ENCODE measurements at regions of chr19 and their contacts with region 1.

Region 1: DNA sequence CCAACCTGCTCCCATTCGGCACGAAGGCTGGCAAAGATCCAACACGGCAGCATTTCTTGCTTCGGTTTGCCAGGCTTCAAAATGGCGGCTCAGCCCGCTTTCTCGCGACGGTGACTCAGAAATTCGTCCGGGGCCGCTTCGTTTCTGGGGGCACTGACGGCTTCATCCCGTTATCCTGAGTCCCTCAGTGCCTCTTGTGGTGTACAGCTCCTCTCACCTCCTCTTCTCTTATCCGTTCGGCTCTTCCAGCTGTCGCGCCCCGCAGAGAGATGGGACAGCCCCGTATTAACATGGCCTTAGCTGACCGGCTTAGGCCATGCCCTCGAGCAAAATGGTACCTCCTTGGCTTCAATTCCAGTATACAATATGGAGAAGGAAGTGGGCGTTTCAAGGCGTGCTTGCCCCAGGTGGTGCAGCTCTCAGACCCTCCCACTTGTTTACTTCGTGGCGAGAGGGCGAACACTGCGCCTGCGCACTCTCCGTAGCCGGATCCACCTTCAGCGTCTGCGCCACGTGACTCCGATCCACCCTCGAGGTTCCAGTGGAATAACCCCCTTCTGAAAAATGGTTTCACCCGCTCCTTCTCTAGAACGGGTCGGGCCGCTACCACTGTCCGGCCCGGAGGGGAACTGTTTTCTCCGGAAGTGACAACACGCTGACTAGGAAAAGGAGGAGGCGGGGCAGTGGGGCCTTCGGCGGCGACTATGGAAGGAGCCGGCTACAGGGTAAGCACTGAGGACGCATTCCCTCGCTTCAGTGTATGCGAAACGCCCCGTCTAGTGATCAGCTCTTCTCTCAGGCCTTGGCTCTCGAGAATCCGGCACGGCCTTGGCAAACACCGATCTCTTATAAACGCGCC is at the starts of genes AKT1S1 and TBC1D17:
- DNase-seq: peak; percentile 100
- H3K4me3 Mint-ChIP-seq: no peak within 1 kb of the TSS
- H3K27ac Mint-ChIP-seq: no peak within 1 kb of the TSS
- H3K4me1 Mint-ChIP-seq: peaks cover 23% of the 10 kb centered on the region
- H3K27me3 Mint-ChIP-seq: no peaks in the 10 kb centered on the region
- total RNA-seq, gene AKT1S1: 31.5 and 33.5 TPM in 2 replicates
- total RNA-seq, gene TBC1D17: 36.5 and 36.8 TPM in 2 replicates

Region 2: GRCh38 chr19:48637170-48637947 is 1239.9 kb before region 1 on chr19 and contains the start of gene DBP:
- intact Hi-C with region 1: loop called (anchors 5 kb)
- DNase-seq: peak; percentile 100
- H3K4me3 Mint-ChIP-seq: peak within 1 kb of the TSS; percentile 86
- H3K27ac Mint-ChIP-seq: peak within 1 kb of the TSS; percentile 99
- H3K4me1 Mint-ChIP-seq: peaks cover 35% of the 10 kb centered on the region
- H3K27me3 Mint-ChIP-seq: peaks cover 2% of the 10 kb centered on the region
- total RNA-seq, gene DBP: 10.7 and 11.2 TPM in 2 replicates

Region 3: GRCh38 chr19:49590071-49590970 is 286.9 kb before region 1 on chr19:
- intact Hi-C with region 1: loop called (anchors 1 kb)
- DNase-seq: peak; percentile 98
- H3K4me3 Mint-ChIP-seq: peak overlapping the region; percentile 88
- H3K27ac Mint-ChIP-seq: peak overlapping the region; percentile 67
- H3K4me1 Mint-ChIP-seq: peaks cover 30% of the 10 kb centered on the region
- H3K27me3 Mint-ChIP-seq: peaks cover 11% of the 10 kb centered on the region

Region 4: GRCh38 chr19:49676690-49677231 is 200.5 kb before region 1 on chr19:
- intact Hi-C with region 1: loop called (anchors 1 kb)
- DNase-seq: peak; percentile 99
- H3K4me3 Mint-ChIP-seq: peak overlapping the region; percentile 95
- H3K27ac Mint-ChIP-seq: peak overlapping the region; percentile 99
- H3K4me1 Mint-ChIP-seq: peaks cover 31% of the 10 kb centered on the region
- H3K27me3 Mint-ChIP-seq: no peaks in the 10 kb centered on the region

Region 5: GRCh38 chr19:49801966-49802690 is 75.1 kb before region 1 on chr19:
- intact Hi-C with region 1: no loop called
- DNase-seq: no peak
- H3K4me3 Mint-ChIP-seq: no peak overlapping the region
- H3K27ac Mint-ChIP-seq: no peak overlapping the region
- H3K4me1 Mint-ChIP-seq: peaks cover 2% of the 10 kb centered on the region
- H3K27me3 Mint-ChIP-seq: no peaks in the 10 kb centered on the region

Region 6: DNA sequence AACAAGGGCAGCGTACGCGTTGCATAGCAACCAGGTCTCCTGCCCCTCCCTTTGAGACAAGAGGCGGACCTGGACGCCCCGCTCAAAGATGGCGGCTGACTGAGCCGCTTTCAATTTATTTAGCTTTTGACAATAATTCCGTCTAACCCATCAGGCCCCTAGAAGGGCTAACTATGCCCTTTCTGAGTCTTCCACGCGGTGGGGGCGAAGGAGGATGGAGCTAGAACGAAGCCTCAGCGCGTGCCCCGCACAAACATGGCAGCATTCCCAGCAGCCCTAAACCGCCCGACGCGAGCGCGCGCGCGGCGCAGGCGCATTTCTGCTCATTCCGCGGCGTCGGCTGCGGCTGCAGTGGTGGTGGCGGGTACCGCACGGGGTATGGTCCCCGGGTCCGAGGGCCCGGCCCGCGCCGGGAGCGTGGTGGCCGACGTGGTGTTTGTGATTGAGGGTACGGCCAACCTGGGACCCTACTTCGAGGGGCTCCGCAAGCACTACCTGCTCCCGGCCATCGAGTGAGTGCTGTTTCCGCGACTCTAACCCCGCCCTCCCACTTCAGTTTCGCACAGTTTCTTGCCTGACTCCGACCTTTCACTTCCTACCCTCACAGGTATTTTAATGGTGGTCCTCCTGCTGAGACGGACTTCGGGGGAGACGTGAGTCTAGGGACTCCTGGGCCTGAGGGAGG is 59.1 kb before region 1 on chr19 and contains the start of gene MED25:
- intact Hi-C with region 1: loop called (anchors 1 kb)
- DNase-seq: peak; percentile 97
- H3K4me3 Mint-ChIP-seq: peak within 1 kb of the TSS; percentile 88
- H3K27ac Mint-ChIP-seq: peak within 1 kb of the TSS; percentile 92
- H3K4me1 Mint-ChIP-seq: peaks cover 18% of the 10 kb centered on the region
- H3K27me3 Mint-ChIP-seq: peaks cover 2% of the 10 kb centered on the region
- total RNA-seq, gene MED25: 49.1 and 51.5 TPM in 2 replicates

Region 7: DNA sequence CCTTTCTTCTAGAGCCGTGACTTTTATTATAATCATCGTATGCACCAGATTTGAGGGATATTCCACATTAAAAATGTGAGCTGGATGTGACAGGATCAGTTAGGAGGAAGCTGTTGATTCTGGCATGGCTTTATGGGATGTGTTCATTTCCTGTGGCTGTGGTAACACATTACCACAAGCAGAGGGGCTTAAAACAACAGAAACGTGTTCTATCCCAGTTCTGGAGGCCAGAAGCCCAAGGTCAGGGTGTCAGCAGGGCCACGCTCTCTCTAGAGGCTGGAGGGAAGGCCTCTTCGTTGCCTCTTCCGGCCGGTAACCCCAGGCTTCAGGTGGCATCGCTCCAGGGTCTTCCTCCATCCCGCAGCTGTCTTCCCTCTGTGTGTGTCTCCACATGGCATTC is 44.7 kb before region 1 on chr19:
- intact Hi-C with region 1: no loop called
- DNase-seq: no peak
- H3K4me3 Mint-ChIP-seq: no peak overlapping the region
- H3K27ac Mint-ChIP-seq: no peak overlapping the region
- H3K4me1 Mint-ChIP-seq: peaks cover 5% of the 10 kb centered on the region
- H3K27me3 Mint-ChIP-seq: no peaks in the 10 kb centered on the region

Region 8: DNA sequence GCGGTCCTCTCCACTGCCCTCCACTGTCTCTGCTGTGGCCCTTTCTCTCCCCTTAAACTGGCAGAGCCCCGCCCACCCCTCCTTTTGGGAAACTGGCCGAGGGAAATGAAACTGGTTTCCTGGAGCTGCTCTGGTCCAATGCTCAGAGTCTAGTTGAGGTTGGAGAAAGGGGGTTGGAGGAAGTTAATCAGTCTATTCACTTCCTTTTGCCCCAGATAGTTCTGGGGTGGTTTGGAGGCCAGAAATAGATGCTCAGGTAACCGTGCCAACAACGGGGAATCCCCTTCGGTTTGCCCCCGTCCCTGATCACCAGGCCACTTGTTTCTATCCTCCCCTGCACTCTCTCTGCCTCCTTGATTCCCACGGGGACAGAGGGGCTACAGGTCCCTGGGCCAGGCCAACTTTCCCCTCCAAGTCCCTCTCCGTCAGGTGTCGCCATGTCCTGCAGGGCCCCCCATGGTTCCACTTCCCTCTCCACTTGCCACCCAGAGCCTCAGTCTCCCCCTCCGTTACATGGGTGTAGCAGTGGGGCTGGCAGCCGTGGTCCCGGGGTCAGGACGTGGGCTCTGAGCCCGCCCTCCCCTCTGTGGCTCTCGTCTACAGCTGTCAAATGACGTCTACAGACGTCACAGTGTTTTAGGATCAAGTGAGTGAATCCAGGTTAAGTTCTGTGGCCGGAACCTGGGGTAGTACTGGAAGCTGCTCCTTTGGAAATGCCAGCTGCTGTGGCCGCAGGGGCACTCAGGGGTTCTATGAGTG is 19.8 kb after region 1 on chr19 and contains the start of gene IL4I1:
- intact Hi-C with region 1: loop called (anchors 1 kb)
- DNase-seq: peak; percentile 88
- H3K4me3 Mint-ChIP-seq: peak within 1 kb of the TSS; percentile 89
- H3K27ac Mint-ChIP-seq: peak within 1 kb of the TSS; percentile 100
- H3K4me1 Mint-ChIP-seq: peaks cover 51% of the 10 kb centered on the region
- H3K27me3 Mint-ChIP-seq: peaks cover 2% of the 10 kb centered on the region
- total RNA-seq, gene IL4I1: 40.4 and 41.4 TPM in 2 replicates

Region 9: DNA sequence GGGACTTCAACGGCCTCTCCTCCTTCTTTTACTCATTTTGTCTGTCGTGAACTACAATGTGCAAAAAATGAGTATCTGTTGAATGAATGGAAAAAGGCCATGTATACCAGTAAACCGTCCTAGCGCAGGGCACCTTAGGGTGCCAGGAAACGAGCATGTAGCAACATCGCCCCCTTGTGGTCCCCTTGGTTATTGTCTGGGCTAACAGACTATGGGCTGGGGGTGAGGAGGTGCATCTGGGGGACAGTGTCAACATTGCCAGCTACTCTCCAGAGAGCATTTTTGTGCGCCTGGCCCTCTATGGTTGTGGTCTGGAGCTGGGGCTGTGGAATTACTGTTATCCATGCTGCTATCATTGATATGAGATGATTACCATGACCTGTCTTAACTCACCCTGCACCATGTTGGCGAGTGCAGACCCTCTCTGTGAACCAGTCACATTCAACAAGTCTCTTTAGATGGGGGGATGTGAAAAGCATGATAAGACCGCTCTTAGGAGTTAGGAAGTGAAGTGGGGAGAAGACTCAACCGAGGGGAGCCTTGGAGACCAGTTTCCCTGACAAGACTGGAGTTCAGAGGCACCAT is 106.5 kb after region 1 on chr19:
- intact Hi-C with region 1: loop called (anchors 10 kb)
- DNase-seq: peak; percentile 93
- H3K4me3 Mint-ChIP-seq: no peak overlapping the region
- H3K27ac Mint-ChIP-seq: no peak overlapping the region
- H3K4me1 Mint-ChIP-seq: peaks cover 9% of the 10 kb centered on the region
- H3K27me3 Mint-ChIP-seq: no peaks in the 10 kb centered on the region

Measured in activated CD4-positive, alpha-beta T cell treated with anti-CD3 and anti-CD28 coated beads, Interleukin-2, amount 10 ng/mL, durations not matched to agents 24 days and 14 days (primary cell).